ENCODE measurements at regions of chr1 and their contacts with region 1.

Region 1: GRCh38 chr1:58922302-58923089 is 138.6 kb upstream of the JUN start:
- DNase-seq: peak; percentile 97 to 98
- H3K4me3 ChIP-seq: no peak overlapping the region
- H3K27ac ChIP-seq: peak overlapping the region; percentile 76 to 91 (median 87)
- H3K4me1 ChIP-seq: peaks cover 29 to 35% of the 10 kb centered on the region in 2 donors
- H3K27me3 ChIP-seq: no peaks in the 10 kb centered on the region
- CTCF ChIP-seq: no peak
- POLR2A ChIP-seq: peak in 1 of 2 donors; percentile 67

Region 2: DNA sequence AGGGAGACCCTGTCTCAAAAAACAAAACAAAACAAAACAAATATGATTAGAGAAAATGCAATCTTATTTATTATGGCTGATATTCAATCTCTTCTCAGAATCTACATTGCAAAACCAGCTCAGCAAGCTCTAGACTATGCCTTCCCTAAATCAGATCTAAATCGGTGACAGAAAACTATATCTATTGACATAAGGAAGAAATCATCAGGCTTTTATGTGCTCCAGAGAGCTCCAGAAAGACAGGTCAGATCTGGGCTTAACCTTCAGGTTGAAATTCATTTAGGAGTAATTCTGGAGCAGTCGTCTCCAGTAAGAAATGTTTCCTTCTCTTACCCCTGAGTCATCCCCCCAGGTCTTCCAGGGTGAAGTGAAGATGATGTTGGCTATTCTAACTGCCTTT is 276.4 kb before region 1 on chr1:
- intact Hi-C with region 1: no loop called
- DNase-seq: no peak
- H3K4me3 ChIP-seq: no peak overlapping the region
- H3K27ac ChIP-seq: no peak overlapping the region
- H3K4me1 ChIP-seq: no peaks in the 10 kb centered on the region
- H3K27me3 ChIP-seq: no peaks in the 10 kb centered on the region
- CTCF ChIP-seq: no peak
- POLR2A ChIP-seq: no peak

Region 3: GRCh38 chr1:58791106-58791505 is 131.4 kb before region 1 on chr1:
- intact Hi-C with region 1: loop called (anchors 10 kb)
- DNase-seq: no peak
- H3K4me3 ChIP-seq: no peak overlapping the region
- H3K27ac ChIP-seq: no peak overlapping the region
- H3K4me1 ChIP-seq: peaks cover 5% of the 10 kb centered on the region in 2 donors
- H3K27me3 ChIP-seq: no peaks in the 10 kb centered on the region
- CTCF ChIP-seq: no peak
- POLR2A ChIP-seq: no peak

Region 4: GRCh38 chr1:58983162-58983561 is 60.7 kb after region 1 on chr1:
- intact Hi-C with region 1: no loop called
- DNase-seq: no peak
- H3K4me3 ChIP-seq: no peak overlapping the region
- H3K27ac ChIP-seq: peak overlapping the region in 1 of 3 donors; percentile 14
- H3K4me1 ChIP-seq: peaks cover 13 to 19% of the 10 kb centered on the region in 2 donors
- H3K27me3 ChIP-seq: no peaks in the 10 kb centered on the region
- CTCF ChIP-seq: no peak
- POLR2A ChIP-seq: no peak

Measured in thyroid gland (tissue), 4 donors.